Left lung (tissue), 14 donors: ENCODE measurements at regions of chr6 and their contacts with region 1.

Region 1: DNA sequence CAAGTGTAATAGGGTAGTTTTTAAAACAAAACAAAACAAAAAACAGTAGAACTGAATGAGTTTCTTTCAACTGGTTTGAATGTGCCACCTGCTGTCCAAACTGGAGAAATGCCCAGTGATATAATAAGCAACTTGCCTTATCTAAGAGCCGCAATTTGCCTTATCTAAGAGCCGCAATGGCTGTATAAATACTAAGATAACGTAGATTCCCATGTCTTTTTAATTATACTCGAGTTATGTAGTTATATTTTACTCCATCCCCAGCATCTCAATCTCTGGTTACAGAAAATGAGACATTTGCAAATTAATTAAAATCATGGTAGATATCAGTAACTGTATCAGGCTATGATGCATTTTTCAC is 67.2 kb downstream of the RPP40 start:
- DNase-seq: peak in 2 of 4 donors; percentile 36 to 64
- ATAC-seq: peak; percentile 69
- H3K4me3 ChIP-seq: no peak overlapping the region
- H3K27ac ChIP-seq: no peak overlapping the region
- H3K4me1 ChIP-seq: peaks cover 2 to 17% of the 10 kb centered on the region in 2 donors
- H3K27me3 ChIP-seq: no peaks in the 10 kb centered on the region
- CTCF ChIP-seq: peak; percentile 51 to 62

Region 2: DNA sequence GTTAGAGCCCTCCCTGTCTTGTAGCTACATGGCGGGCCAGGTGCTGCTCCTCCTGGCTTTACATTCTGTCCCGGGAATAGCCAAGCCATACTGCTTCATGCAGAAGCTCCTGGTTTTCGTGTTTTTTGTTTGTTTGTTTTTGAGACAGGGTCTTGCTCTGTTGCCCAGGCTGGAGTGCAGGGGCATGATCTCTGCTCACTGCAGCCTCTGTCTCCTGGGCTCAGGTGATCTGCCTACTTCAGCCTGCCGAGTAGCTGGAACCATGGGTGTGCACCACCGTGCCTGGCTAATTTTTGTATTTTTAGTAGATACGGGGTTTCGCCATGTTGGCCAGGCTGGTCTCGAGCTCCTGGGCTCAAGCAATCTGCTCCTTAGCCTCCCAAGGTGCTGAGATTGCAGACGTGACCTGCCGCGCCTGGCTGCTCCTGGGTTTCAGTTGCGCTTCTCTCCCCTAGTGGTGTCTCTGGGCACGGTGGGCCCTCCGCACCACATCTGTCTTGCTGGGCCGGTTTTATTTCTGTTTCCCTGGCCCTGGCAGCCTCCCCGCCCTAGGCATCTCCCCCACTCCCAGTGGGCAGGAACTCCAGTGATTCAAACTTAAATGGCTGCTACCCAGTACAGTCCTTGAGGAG is 147.6 kb before region 1 on chr6:
- intact Hi-C with region 1: loop called in 1 of 2 experiments (anchors 10 kb)
- DNase-seq: peak in 1 of 4 donors; percentile 55
- ATAC-seq: no peak
- H3K4me3 ChIP-seq: no peak overlapping the region
- H3K27ac ChIP-seq: no peak overlapping the region
- H3K4me1 ChIP-seq: peaks cover 2 to 29% of the 10 kb centered on the region in 2 donors
- H3K27me3 ChIP-seq: no peaks in the 10 kb centered on the region
- CTCF ChIP-seq: no peak